ENCODE measurements at regions of chr1 and their contacts with region 1.

Region 1: GRCh38 chr1:11645670-11646265 is 8.5 kb downstream of the FBXO2 start:
- DNase-seq: peak; percentile 77 to 90 (median 80)
- ATAC-seq: peak; percentile 59
- H3K4me3 ChIP-seq: no peak overlapping the region
- H3K27ac ChIP-seq: no peak overlapping the region
- H3K4me1 ChIP-seq: peaks cover 15 to 39% of the 10 kb centered on the region in 2 experiments; a peak in 4 of 5 replicates
- H3K27me3 ChIP-seq: peaks cover 2 to 13% of the 10 kb centered on the region in 2 experiments; a peak in 4 of 5 replicates
- CTCF ChIP-seq: peak; percentile 85 to 93 (median 92)
- EP300 ChIP-seq: no peak
- POLR2A ChIP-seq: no peak
- RAD21 ChIP-seq: peak; percentile 80 to 89

Region 2: DNA sequence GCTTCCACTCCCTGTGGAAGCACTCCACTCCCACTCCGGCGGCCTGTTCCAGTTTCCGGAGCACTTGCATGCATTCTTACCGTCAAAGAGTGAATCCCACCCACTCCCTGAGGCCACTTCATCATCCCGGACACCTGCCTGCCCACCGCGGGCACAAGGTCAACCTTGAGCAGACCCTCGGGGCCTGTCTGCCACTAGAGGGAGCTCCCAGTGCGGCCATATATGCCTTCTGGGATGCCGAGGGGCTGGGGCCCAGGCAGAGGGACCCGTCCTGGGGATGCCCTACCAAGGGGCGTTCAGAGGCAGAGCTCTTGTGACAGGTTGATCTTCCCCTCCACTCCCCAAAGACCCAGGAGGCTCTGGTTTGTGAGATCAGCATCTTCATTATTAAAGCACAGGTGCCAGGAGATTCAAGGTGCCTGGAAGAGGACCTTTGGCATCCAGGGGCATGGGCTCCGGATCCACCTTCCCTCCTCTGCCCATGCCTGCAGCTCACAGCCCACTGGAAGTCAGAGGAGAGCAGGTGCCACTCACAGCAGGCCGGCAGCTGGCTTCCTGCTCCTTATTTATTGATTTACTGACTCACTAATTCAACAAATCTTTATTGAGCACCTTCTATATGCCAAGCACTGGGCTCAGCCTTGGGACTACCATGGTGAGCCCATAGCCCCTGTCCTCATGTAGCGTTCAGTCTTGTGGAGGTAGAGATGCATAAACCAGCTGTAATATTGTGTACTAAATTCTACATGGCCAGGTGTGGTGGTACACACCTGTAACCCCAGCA is 325.4 kb before region 1 on chr1:
- CTCF ChIA-PET with region 1: interaction called, 3 read pairs
- POLR2A ChIA-PET with region 1: interaction called, 3 read pairs
- in situ Hi-C with region 1: no loop called
- intact Hi-C with region 1: loop called (anchors 1 kb)
- DNase-seq: peak; percentile 47 to 64 (median 62)
- ATAC-seq: peak; percentile 71
- H3K4me3 ChIP-seq: no peak overlapping the region
- H3K27ac ChIP-seq: no peak overlapping the region
- H3K4me1 ChIP-seq: peaks cover 0 to 11% of the 10 kb centered on the region in 2 experiments; a peak in 2 of 5 replicates
- H3K27me3 ChIP-seq: peaks cover 38 to 63% of the 10 kb centered on the region in 2 experiments
- CTCF ChIP-seq: peak; percentile 64 to 82 (median 64)
- EP300 ChIP-seq: no peak
- POLR2A ChIP-seq: no peak
- RAD21 ChIP-seq: peak in 1 of 2 experiments; percentile 54; a peak in 2 of 4 replicates

Region 3: DNA sequence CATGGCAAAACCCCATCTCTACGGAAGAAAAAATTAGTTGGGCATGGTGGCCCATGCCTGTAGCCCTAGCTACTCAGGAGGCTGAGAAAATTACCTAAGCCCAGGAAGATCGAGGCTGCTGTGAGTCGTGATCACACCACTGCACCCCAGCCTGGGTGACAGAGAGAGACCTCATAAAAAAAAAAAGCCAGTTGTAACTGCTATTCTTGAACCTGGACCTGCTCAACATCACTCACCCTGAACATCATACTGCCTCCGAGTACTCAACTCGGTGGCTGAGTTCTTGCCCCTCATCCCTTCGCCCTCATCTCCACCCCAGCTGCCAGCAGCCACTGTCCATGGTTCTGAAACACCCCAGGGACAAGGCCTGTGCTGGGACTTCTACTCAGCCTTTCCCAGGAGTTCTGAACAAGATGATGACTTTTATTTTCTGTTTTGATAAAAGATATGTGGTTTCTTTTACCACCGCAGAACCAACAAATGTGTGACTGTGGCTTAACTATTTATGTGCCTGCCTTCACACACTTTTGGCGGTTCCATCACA is 172.2 kb before region 1 on chr1:
- CTCF ChIA-PET with region 1: interaction called, 7 read pairs
- POLR2A ChIA-PET with region 1: interaction called, 5 read pairs
- in situ Hi-C with region 1: no loop called
- intact Hi-C with region 1: loop called (anchors 5 kb)
- DNase-seq: peak; percentile 53 to 76 (median 73)
- ATAC-seq: peak; percentile 73
- H3K4me3 ChIP-seq: no peak overlapping the region
- H3K27ac ChIP-seq: no peak overlapping the region
- H3K4me1 ChIP-seq: peaks cover 0 to 4% of the 10 kb centered on the region in 2 experiments; a peak in 2 of 5 replicates
- H3K27me3 ChIP-seq: no peaks in the 10 kb centered on the region; a peak in 2 of 5 replicates
- CTCF ChIP-seq: no peak
- EP300 ChIP-seq: no peak
- POLR2A ChIP-seq: no peak
- RAD21 ChIP-seq: no peak

Region 4: GRCh38 chr1:11719313-11720032 is 73.7 kb after region 1 on chr1:
- CTCF ChIA-PET with region 1: interaction called, 52 read pairs
- POLR2A ChIA-PET with region 1: interaction called, 7 read pairs
- in situ Hi-C with region 1: no loop called
- intact Hi-C with region 1: loop called (anchors 1 kb)
- DNase-seq: peak; percentile 71 to 85 (median 77)
- ATAC-seq: peak; percentile 79
- H3K4me3 ChIP-seq: no peak overlapping the region
- H3K27ac ChIP-seq: no peak overlapping the region
- H3K4me1 ChIP-seq: peaks cover 4 to 13% of the 10 kb centered on the region in 2 experiments; a peak in 4 of 5 replicates
- H3K27me3 ChIP-seq: peaks cover 19 to 25% of the 10 kb centered on the region in 2 experiments; a peak in 4 of 5 replicates
- CTCF ChIP-seq: peak; percentile 94 to 99 (median 98)
- EP300 ChIP-seq: 0 out of 2 replicates have a peak, but pooled peaks have one; percentile 6
- POLR2A ChIP-seq: no peak
- RAD21 ChIP-seq: peak; percentile 98 to 99